CD8-positive, alpha-beta T cell (primary cell): ENCODE measurements at regions of chr7 and their contacts with region 1.

Region 1: GRCh38 chr7:149714050-149714909 is 59.1 kb downstream of the ZNF467 start:
- DNase-seq: peak; percentile 86 to 97 (median 94)
- ATAC-seq: peak; percentile 95
- H3K4me3 ChIP-seq: peak overlapping the region; percentile 65 to 68
- H3K4me3 Mint-ChIP-seq: peak overlapping the region; percentile 80
- H3K27ac ChIP-seq: peak overlapping the region; percentile 12
- H3K27ac Mint-ChIP-seq: peak overlapping the region; percentile 22
- H3K4me1 ChIP-seq: peaks cover 18% of the 10 kb centered on the region
- H3K4me1 Mint-ChIP-seq: peaks cover 23% of the 10 kb centered on the region
- H3K27me3 ChIP-seq: no peaks in the 10 kb centered on the region
- H3K27me3 Mint-ChIP-seq: no peaks in the 10 kb centered on the region
- CTCF ChIP-seq: no peak

Region 2: GRCh38 chr7:149524394-149524793 is 189.9 kb before region 1 on chr7:
- CTCF ChIA-PET with region 1: no interaction called
- POLR2A ChIA-PET with region 1: no interaction called
- intact Hi-C with region 1: no loop called
- DNase-seq: no peak
- ATAC-seq: no peak
- H3K4me3 ChIP-seq: no peak overlapping the region
- H3K4me3 Mint-ChIP-seq: no peak overlapping the region
- H3K27ac ChIP-seq: no peak overlapping the region
- H3K27ac Mint-ChIP-seq: no peak overlapping the region
- H3K4me1 ChIP-seq: no peaks in the 10 kb centered on the region
- H3K4me1 Mint-ChIP-seq: no peaks in the 10 kb centered on the region
- H3K27me3 ChIP-seq: no peaks in the 10 kb centered on the region
- H3K27me3 Mint-ChIP-seq: peaks cover 9% of the 10 kb centered on the region
- CTCF ChIP-seq: no peak

Region 3: GRCh38 chr7:149727899-149728476 is 13.7 kb after region 1 on chr7:
- CTCF ChIA-PET with region 1: no interaction called
- POLR2A ChIA-PET with region 1: no interaction called
- intact Hi-C with region 1: no loop called
- DNase-seq: no peak
- ATAC-seq: no peak
- H3K4me3 ChIP-seq: no peak overlapping the region
- H3K4me3 Mint-ChIP-seq: no peak overlapping the region
- H3K27ac ChIP-seq: no peak overlapping the region
- H3K27ac Mint-ChIP-seq: no peak overlapping the region
- H3K4me1 ChIP-seq: no peaks in the 10 kb centered on the region
- H3K4me1 Mint-ChIP-seq: no peaks in the 10 kb centered on the region
- H3K27me3 ChIP-seq: no peaks in the 10 kb centered on the region
- H3K27me3 Mint-ChIP-seq: no peaks in the 10 kb centered on the region
- CTCF ChIP-seq: no peak

Region 4: GRCh38 chr7:149771721-149772240 is 57.5 kb after region 1 on chr7:
- CTCF ChIA-PET with region 1: no interaction called
- POLR2A ChIA-PET with region 1: no interaction called
- intact Hi-C with region 1: loop called (anchors 1 kb)
- DNase-seq: peak; percentile 70 to 91 (median 84)
- ATAC-seq: peak; percentile 88
- H3K4me3 ChIP-seq: peak overlapping the region; percentile 63 to 66
- H3K4me3 Mint-ChIP-seq: peak overlapping the region; percentile 71
- H3K27ac ChIP-seq: no peak overlapping the region
- H3K27ac Mint-ChIP-seq: no peak overlapping the region
- H3K4me1 ChIP-seq: peaks cover 12% of the 10 kb centered on the region
- H3K4me1 Mint-ChIP-seq: peaks cover 6% of the 10 kb centered on the region
- H3K27me3 ChIP-seq: no peaks in the 10 kb centered on the region
- H3K27me3 Mint-ChIP-seq: no peaks in the 10 kb centered on the region
- CTCF ChIP-seq: no peak

Region 5: DNA sequence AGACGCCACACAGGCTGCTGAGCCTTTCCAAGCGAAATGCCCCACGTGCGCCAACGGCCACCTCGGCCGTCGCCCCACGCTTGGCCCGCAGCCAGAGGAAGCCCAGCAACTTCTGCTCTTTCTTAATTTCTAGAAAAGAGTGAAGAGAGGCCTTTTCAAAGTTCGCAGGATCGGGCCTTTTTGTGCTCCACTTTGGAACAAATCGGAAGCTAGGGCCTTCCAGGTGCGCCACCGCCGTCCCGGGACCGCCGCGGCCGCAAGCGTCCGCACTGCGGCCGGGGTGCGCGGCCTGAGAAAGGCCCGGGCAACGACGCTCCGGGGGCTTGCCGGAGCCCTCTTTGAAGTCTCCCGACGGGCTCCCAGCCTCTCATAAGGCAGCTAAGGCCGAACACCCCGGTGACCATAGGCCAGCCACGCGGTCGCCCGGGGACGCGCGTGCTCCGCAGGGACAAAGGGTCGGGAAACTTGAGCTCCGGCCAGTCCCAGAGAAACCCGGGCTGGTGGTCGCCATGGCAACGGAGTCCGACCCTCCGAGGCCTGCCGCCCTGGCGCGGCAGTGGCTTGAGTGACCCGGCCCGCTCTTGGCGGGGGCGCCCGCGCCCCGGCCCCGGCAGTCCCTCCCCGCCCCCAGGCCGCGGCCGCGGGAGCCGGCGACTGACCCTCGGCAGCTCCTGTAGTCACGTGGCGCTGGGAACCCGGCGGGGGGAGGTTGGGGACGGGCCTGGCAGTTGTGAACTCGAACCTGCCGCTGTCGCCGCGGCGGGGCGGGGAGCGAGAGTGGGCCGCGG is 654.0 kb after region 1 on chr7 and contains the start of gene REPIN1:
- CTCF ChIA-PET with region 1: no interaction called
- POLR2A ChIA-PET with region 1: no interaction called
- intact Hi-C with region 1: loop called in 1 of 2 experiments (anchors 10 kb)
- DNase-seq: peak; percentile 52 to 90 (median 85)
- ATAC-seq: no peak
- H3K4me3 ChIP-seq: peak within 1 kb of the TSS; percentile 78 to 95
- H3K4me3 Mint-ChIP-seq: peak within 1 kb of the TSS; percentile 95
- H3K27ac ChIP-seq: peak within 1 kb of the TSS; percentile 53 to 73
- H3K27ac Mint-ChIP-seq: peak within 1 kb of the TSS; percentile 95
- H3K4me1 ChIP-seq: peaks cover 47% of the 10 kb centered on the region
- H3K4me1 Mint-ChIP-seq: peaks cover 58% of the 10 kb centered on the region
- H3K27me3 ChIP-seq: no peaks in the 10 kb centered on the region
- H3K27me3 Mint-ChIP-seq: no peaks in the 10 kb centered on the region
- CTCF ChIP-seq: no peak
- total RNA-seq, gene REPIN1: 54.0 to 54.1 TPM